ENCODE measurements at regions of chr6 and their contacts with region 1.

Region 1: DNA sequence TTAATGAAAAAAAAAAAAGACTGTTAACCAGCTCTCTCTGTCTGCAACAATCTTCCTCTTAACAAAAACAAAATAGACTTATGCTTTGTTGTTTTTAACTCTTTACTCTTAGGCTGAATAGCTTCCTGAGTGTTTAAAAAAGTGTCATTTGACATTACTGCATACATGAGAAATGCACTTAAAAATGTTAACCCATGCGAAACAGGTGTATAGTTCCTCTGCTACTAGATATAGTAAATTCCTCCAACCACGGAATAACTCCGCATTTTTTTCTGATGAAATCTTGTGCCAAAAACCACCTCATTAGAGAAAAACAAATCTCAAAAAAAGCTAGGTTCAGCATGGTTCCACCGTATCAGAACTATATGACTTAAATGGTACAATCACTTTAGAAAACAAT is 426.0 kb downstream of the ADGRB3 start:
- DNase-seq: no peak
- H3K4me3 ChIP-seq: no peak overlapping the region
- H3K27ac ChIP-seq: no peak overlapping the region
- H3K4me1 ChIP-seq: no peaks in the 10 kb centered on the region
- H3K27me3 ChIP-seq: no peaks in the 10 kb centered on the region
- CTCF ChIP-seq: no peak

Region 2: DNA sequence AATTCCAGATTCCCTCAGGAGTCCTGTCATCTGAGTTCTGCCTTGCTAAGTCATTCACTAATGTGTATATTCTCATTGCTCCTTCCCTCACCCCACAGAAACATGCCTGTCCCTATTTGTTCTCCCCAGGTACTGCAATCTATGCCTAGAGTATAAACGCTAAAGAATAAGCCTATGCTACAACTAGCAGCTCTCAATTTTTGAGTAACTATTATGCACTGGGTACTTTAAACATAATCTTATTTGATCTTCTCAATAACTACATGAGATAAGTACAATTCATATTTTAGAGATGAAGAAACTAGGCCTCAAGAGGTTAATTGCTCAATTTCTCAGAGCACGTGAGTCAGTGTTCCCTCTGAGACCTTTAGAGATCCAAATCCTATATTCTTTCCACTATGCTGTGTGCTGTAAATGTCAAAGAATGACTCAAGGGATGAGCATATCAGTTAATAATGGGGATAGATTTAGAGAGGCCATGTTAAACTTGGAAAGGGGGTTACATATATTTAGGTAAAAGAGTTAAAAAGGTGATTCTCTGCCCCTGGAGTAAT is 849.7 kb before region 1 on chr6:
- CTCF ChIA-PET with region 1: no interaction called
- POLR2A ChIA-PET with region 1: interaction called, 13 read pairs
- intact Hi-C with region 1: no loop called
- DNase-seq: no peak
- H3K4me3 ChIP-seq: no peak overlapping the region
- H3K27ac ChIP-seq: no peak overlapping the region
- H3K4me1 ChIP-seq: no peaks in the 10 kb centered on the region
- H3K27me3 ChIP-seq: no peaks in the 10 kb centered on the region
- CTCF ChIP-seq: no peak

Region 3: DNA sequence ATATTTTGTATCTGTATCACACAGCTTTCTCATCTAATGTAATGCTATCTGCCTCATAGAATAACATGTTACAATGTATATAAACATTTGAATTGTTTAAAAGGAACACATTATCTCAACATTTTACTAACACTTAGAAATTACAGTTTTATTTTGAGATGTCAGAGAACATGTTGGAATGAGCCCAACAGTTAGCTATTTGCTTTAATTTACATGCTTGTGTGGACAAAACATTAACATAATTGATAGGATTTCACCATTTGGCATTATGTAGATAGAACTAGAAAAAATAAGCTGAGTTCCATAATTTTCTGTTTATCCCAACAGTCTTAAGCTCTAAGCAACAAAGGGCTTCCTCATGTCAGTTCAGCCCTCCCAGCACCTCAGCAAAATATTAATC is 404.8 kb after region 1 on chr6:
- CTCF ChIA-PET with region 1: no interaction called
- POLR2A ChIA-PET with region 1: no interaction called
- intact Hi-C with region 1: no loop called
- DNase-seq: no peak
- H3K4me3 ChIP-seq: no peak overlapping the region
- H3K27ac ChIP-seq: no peak overlapping the region
- H3K4me1 ChIP-seq: no peaks in the 10 kb centered on the region
- H3K27me3 ChIP-seq: no peaks in the 10 kb centered on the region
- CTCF ChIP-seq: no peak

Measured in PC-9 (cell line).